GM12878 (cell line): ENCODE measurements at regions of chr15 and their contacts with region 1.

Region 1: GRCh38 chr15:77409259-77410156 is 10.4 kb downstream of the PEAK1 start:
- DNase-seq: peak; percentile 51
- ATAC-seq: peak; percentile 83
- H3K4me3 ChIP-seq: no peak overlapping the region
- H3K27ac ChIP-seq: peak overlapping the region; percentile 27
- H3K4me1 ChIP-seq: peaks cover 10% of the 10 kb centered on the region; the same call in 1 of the 2 replicates
- H3K27me3 ChIP-seq: no peaks in the 10 kb centered on the region
- CTCF ChIP-seq: no peak
- EP300 ChIP-seq: peak in 1 of 2 experiments; percentile 22; a peak in 1 of 4 replicates
- POLR2A ChIP-seq: no peak
- RAD21 ChIP-seq: no peak

Region 2: DNA sequence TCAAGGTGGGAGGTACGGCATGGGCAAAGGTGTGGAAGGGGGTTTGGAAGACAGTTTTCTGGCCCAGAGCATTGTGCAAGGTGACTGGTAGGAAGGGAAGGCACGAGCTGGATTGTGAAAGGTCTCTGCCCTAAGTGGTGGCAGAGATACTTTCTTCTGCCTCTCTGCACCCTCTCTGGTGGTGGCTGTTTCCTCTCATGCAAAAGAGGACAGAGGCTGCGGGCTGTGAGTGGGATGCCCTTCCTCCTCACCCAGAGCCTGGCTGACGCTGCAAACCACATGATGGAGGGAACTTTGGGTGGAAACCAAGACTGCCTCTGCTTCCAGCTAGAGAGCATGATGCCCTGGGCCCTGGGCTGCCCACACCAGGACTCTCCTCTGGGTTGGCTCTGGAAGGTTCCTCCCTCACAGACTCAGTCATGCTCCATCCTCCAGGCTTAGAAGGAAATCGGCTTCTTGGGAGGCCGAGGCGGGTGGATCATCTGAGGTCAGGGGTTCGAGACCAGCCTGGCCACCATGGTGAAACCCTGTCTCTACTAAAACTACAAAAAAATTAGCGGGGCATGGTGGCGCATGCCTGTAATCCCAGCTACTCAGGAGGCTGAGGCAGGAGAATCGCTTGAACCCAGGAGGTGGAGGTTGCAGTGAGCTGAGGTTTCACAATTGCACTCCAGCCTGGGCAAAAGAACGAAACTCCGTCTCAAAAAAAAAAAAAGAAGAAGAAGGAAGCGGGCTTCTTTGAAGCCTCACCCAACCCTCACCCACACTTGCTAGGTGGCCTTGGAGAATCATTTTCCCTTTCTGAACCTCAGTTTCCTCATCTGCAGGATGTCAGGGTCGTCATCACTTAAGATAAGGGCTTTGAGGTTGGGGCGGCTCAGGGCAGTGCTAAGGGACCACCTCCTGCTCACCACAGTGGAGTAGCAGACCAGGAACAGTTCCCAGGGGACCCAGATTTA is 406.3 kb before region 1 on chr15:
- CTCF ChIA-PET with region 1: no interaction called
- POLR2A ChIA-PET with region 1: no interaction called
- RAD21 ChIA-PET with region 1: no interaction called
- SMC1A ChIA-PET with region 1: no interaction called
- in situ Hi-C with region 1: no loop called
- intact Hi-C with region 1: no loop called
- DNase-seq: peak; percentile 77
- ATAC-seq: peak; percentile 90
- H3K4me3 ChIP-seq: peak overlapping the region; percentile 26; the same call in 1 of the 2 replicates
- H3K27ac ChIP-seq: peak overlapping the region; percentile 16
- H3K4me1 ChIP-seq: peaks cover 27% of the 10 kb centered on the region
- H3K27me3 ChIP-seq: no peaks in the 10 kb centered on the region
- CTCF ChIP-seq: no peak
- EP300 ChIP-seq: peak in 1 of 2 experiments; percentile 20; a peak in 1 of 4 replicates
- POLR2A ChIP-seq: no peak
- RAD21 ChIP-seq: no peak

Region 3: GRCh38 chr15:77384585-77385359 is 24.7 kb before region 1 on chr15:
- CTCF ChIA-PET with region 1: interaction called, 6 read pairs
- POLR2A ChIA-PET with region 1: interaction called, 4 read pairs
- RAD21 ChIA-PET with region 1: interaction called, 14 read pairs
- SMC1A ChIA-PET with region 1: interaction called, 5 read pairs
- in situ Hi-C with region 1: no loop called
- intact Hi-C with region 1: no loop called
- DNase-seq: no peak
- ATAC-seq: peak; percentile 60
- H3K4me3 ChIP-seq: no peak overlapping the region
- H3K27ac ChIP-seq: no peak overlapping the region
- H3K4me1 ChIP-seq: peaks cover 13% of the 10 kb centered on the region
- H3K27me3 ChIP-seq: no peaks in the 10 kb centered on the region
- CTCF ChIP-seq: no peak
- EP300 ChIP-seq: no peak
- POLR2A ChIP-seq: no peak
- RAD21 ChIP-seq: no peak

Region 4: GRCh38 chr15:77419836-77420609 is 10.5 kb after region 1 on chr15 and contains the start of gene PEAK1:
- CTCF ChIA-PET with region 1: interaction called, 22 read pairs
- POLR2A ChIA-PET with region 1: interaction called, 20 read pairs
- RAD21 ChIA-PET with region 1: interaction called, 37 read pairs
- SMC1A ChIA-PET with region 1: interaction called, 44 read pairs
- in situ Hi-C with region 1: no loop called
- intact Hi-C with region 1: no loop called
- DNase-seq: peak; percentile 86
- ATAC-seq: peak; percentile 93
- H3K4me3 ChIP-seq: peak within 1 kb of the TSS; percentile 84
- H3K27ac ChIP-seq: peak within 1 kb of the TSS; percentile 98
- H3K4me1 ChIP-seq: no peaks in the 10 kb centered on the region; the same call in 1 of the 2 replicates
- H3K27me3 ChIP-seq: no peaks in the 10 kb centered on the region
- CTCF ChIP-seq: no peak
- EP300 ChIP-seq: no peak
- POLR2A ChIP-seq: peak; percentile 91
- RAD21 ChIP-seq: no peak
- polyA plus RNA-seq, gene PEAK1: 0.62 to 1.1 TPM

Region 5: GRCh38 chr15:77864278-77865078 is 455.0 kb after region 1 on chr15:
- CTCF ChIA-PET with region 1: no interaction called
- POLR2A ChIA-PET with region 1: no interaction called
- RAD21 ChIA-PET with region 1: no interaction called
- SMC1A ChIA-PET with region 1: no interaction called
- in situ Hi-C with region 1: no loop called
- intact Hi-C with region 1: no loop called
- DNase-seq: no peak
- ATAC-seq: 0 out of 3 replicates have a peak, but pooled peaks have one; percentile 16
- H3K4me3 ChIP-seq: no peak overlapping the region
- H3K27ac ChIP-seq: no peak overlapping the region
- H3K4me1 ChIP-seq: no peaks in the 10 kb centered on the region
- H3K27me3 ChIP-seq: peaks cover 0 to 2% of the 10 kb centered on the region in 2 experiments; a peak in 3 of 4 replicates
- CTCF ChIP-seq: no peak
- EP300 ChIP-seq: no peak
- POLR2A ChIP-seq: no peak
- RAD21 ChIP-seq: no peak